Activated CD4-positive, alpha-beta T cell treated with anti-CD3 and anti-CD28 coated beads, Interleukin-2, amount 10 ng/mL, durations not matched to agents 24 days and 14 days (primary cell): ENCODE measurements at regions of chr6 and their contacts with region 1.

Region 1: DNA sequence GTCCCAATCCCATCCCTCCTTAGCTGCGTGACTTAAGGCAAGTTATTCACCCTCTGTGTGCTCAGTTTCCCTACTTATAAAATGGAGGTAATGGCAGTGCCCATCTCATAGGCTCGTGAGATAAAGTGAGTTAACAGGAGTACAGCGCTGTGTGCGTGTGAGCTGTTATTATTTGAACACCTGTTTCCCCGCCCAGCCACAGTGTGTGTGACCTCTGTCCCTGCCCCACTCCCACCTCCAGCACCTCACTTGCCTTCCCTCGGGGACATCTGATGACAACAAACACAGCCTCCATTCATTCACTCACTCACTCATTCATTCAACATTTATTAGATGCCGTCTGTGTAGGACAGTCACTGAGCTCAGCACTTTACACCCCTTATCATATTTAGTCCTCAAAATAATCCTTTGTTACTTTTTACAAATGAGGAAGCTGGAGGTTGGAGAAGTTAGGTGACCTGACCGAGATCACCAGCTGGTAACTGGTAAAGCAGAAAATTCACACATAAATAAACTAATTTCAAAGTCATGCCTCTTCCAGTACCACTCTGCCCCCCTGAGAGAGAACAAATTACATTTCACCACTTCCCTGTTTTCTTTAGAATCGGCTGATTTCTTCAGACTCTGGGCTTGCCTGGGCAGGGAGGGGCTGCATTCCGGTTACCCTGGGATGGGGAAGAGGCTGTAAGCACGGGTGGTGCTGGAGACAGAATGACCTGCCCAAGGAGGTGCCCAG is 58.6 kb downstream of the CPNE5 start:
- DNase-seq: no peak
- H3K4me3 Mint-ChIP-seq: no peak overlapping the region
- H3K27ac Mint-ChIP-seq: no peak overlapping the region
- H3K4me1 Mint-ChIP-seq: peaks cover 7% of the 10 kb centered on the region
- H3K27me3 Mint-ChIP-seq: peaks cover 17% of the 10 kb centered on the region

Region 2: GRCh38 chr6:36765594-36766398 is 14.8 kb before region 1 on chr6:
- intact Hi-C with region 1: loop called (anchors 2 kb)
- DNase-seq: peak; percentile 96
- H3K4me3 Mint-ChIP-seq: no peak overlapping the region
- H3K27ac Mint-ChIP-seq: no peak overlapping the region
- H3K4me1 Mint-ChIP-seq: peaks cover 30% of the 10 kb centered on the region
- H3K27me3 Mint-ChIP-seq: no peaks in the 10 kb centered on the region